Posterior cingulate gyrus (tissue), 11 donors: ENCODE measurements at regions of chr9 and their contacts with region 1.

Region 1: GRCh38 chr9:70602321-70603019 is 188.0 kb upstream of the KLF9 start:
- DNase-seq: peak in 6 of 10 donors; percentile 43 to 94 (median 54)

Region 2: DNA sequence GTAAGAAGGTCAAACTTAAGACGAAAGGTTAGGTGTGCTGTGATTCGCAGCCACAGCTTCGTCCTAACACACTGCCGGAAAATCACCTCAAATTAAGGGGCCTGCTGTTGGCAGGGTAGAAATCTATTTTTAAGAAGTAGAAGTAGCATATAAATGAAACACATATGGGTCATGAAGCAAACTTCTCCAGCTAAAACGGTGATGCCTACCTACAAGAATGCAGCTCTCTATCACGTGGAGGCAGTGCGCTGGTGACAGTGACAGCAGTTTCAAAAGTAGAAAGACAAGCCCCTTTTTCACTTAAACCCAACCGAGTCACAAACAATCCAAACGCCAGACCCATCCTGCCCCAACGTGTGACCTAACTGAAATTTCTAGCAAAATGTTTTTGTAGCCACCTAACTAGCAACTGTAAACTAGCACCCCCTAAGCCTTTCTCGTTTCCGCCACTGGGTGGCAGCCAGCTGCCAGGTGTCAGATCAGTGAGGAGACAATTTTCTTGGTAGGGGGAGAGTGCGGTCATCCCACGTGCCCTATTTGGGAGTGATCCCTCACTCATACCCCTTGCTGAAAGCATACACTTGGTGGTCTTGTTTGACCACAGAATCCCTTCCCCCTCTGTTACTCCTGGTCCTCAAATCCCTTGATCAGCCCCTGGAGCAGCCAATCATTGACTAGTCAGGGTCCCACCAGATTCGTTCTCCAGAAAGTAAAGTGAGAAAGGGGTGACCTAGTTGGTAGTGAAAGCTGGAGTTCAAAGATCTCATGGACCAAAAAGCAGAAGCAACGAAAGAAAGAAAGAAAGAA is 630.6 kb before region 1 on chr9:
- intact Hi-C with region 1: loop called (anchors 2 kb)
- DNase-seq: peak; percentile 38 to 96 (median 74)

Region 3: DNA sequence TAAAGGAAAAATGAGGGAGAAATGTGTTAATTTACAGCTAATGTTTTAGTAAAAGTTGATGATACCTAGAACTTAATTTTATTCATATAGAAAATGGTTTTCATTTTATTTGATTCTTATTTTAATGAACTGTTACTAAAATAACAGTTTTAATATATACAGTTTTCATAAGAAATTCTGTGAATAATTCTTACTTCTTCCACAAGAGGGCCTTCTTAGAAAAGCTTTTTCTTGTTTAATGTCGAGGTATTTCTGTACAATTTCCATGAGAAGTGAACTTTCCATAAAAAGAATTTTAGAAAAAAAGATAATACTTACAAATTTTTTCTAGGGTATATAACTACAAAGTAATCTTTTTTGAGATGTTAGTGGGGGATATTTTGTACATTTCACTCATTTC is 261.9 kb before region 1 on chr9:
- intact Hi-C with region 1: loop called (anchors 2 kb)
- DNase-seq: no peak

Region 4: DNA sequence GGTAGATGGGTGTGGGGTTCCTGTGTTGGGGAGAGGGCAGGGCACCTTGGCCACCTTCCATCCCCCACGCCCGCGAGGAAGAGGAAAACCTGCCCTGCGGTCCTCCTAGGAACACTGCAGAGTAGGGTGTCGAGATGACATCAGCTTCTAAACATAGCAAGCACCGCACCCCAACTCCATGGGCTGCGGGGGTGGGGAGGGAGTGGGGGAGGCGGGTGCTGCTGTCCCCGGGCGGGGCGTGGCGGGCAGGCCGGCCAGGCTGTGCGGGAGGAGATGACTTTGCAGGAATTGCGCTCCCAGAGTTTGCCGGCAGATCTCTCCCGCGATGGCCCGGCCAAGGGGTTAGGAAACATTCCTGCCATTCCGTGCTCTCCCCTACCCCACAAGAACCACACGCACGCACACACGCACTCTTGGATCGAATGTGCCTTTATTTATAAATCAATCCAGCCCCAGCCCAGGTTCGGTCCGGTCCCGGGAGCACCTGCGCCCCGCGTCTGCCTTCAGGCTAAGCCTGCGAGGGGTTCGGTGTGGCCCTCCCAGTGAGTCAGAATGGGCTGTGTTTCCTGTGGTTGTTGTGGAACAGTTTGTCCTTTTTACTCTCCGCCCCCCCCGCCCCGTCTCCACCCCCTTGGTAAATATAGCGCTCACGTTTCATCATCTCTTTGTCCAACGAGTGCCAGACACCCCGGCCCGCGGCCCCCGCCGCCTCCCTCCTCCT is 182.8 kb before region 1 on chr9:
- intact Hi-C with region 1: loop called (anchors 2 kb)
- DNase-seq: peak; percentile 73 to 97 (median 90)

Region 5: GRCh38 chr9:70484210-70485130 is 118.0 kb before region 1 on chr9:
- intact Hi-C with region 1: loop called (anchors 5 kb)
- DNase-seq: peak in 1 of 10 donors; percentile 37